H1 (cell line): ENCODE measurements at regions of chr9 and their contacts with region 1.

Region 1: DNA sequence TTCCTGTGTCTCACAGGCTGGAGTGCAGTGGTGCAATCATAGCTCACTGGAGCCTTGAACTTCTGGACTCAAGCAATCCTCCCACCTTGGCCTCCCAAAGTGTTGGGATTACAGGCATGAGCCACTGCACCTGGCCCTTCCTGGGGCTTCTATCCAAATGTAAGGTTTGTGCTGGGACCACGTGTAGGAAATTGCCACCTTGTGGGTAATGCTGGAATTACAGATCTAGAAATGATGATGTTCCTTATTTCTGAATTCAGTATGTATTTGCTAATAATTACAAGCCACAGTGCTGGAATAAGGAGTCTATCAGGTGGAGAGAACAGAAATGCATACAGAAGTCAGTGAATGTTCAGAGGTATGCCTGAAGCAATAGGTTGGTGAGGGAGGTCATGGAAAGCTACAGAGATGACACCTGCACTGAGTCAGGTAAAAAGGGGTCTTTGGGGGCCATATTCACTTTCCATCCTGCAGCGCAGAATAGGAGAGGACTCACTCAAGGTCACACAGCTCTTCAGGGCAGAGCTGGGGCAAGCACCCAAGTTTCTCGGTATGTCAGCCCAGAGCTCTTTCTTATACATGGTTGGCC is 8.8 kb upstream of the IGFBPL1 start:
- DNase-seq: no peak
- H3K4me3 ChIP-seq: no peak overlapping the region
- H3K27ac ChIP-seq: no peak overlapping the region
- H3K4me1 ChIP-seq: no peaks in the 10 kb centered on the region
- H3K27me3 ChIP-seq: peaks cover 0 to 4% (median under 1%) of the 10 kb centered on the region in 4 experiments; a peak in 3 of 7 replicates
- CTCF ChIP-seq: peak in 2 of 3 experiments; percentile 55 to 61; a peak in 3 of 4 replicates
- EP300 ChIP-seq: no peak
- POLR2A ChIP-seq: no peak
- RAD21 ChIP-seq: peak; percentile 55 to 62

Region 2: GRCh38 chr9:38370191-38370590 is 62.8 kb before region 1 on chr9:
- CTCF ChIA-PET with region 1: no interaction called
- POLR2A ChIA-PET with region 1: no interaction called
- DNase-seq: no peak
- H3K4me3 ChIP-seq: no peak overlapping the region
- H3K27ac ChIP-seq: no peak overlapping the region
- H3K4me1 ChIP-seq: no peaks in the 10 kb centered on the region; a peak in 1 of 7 replicates
- H3K27me3 ChIP-seq: no peaks in the 10 kb centered on the region; a peak in 2 of 7 replicates
- CTCF ChIP-seq: no peak
- EP300 ChIP-seq: no peak
- POLR2A ChIP-seq: no peak
- RAD21 ChIP-seq: no peak

Region 3: DNA sequence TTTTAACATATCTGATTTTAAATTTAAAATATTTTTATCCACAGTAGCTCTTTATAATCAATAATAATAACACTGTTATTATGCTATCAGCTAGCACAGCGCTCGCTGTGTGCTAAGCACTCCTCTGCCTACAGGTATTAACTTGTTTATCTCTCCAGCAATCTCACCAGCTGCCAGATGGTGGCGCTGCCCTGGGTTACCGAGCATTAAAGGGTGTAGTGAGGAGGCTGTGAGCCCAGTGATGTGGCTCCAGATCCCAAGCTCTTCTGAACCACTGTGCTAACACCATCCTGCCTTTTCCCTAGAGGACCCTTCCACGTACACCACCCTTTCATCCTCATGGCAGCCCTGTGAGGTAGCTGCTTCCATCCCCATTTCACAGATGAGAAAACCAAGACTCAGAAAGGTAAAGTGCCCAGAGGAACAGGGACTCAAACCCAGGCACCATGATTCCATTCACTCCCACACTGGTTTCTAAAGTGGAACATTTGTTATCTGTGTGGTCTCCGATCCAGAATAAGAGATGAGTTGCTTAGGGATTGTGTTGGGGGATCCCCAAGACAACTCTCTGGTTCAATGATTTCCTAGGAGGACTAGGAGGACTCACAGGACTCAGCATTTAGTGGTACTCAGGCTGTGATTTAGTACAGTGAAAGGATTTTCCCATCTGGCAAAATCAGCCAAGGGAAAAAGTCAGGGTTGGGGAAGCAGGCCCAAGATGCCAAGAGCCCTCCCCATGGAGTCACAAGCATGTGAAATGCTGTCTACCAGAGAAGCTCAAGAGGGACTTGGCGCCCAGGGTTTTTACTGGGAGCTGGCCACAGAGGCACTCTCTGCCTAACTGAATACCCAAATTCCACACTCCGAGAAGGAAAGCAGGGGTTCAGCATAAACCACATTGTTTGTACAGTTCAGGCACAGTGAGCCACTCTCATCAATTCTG is 15.7 kb before region 1 on chr9:
- CTCF ChIA-PET with region 1: interaction called, 47 read pairs
- POLR2A ChIA-PET with region 1: interaction called, 3 read pairs
- DNase-seq: peak in 1 of 2 experiments; percentile 95
- H3K4me3 ChIP-seq: no peak overlapping the region
- H3K27ac ChIP-seq: no peak overlapping the region
- H3K4me1 ChIP-seq: peaks cover 8 to 30% (median 16%) of the 10 kb centered on the region in 4 experiments
- H3K27me3 ChIP-seq: no peaks in the 10 kb centered on the region
- CTCF ChIP-seq: peak; percentile 86 to 90 (median 87)
- EP300 ChIP-seq: no peak
- POLR2A ChIP-seq: no peak
- RAD21 ChIP-seq: peak; percentile 65 to 76

Region 4: GRCh38 chr9:38443181-38443580 is 10.2 kb after region 1 on chr9:
- CTCF ChIA-PET with region 1: interaction called, 50 read pairs
- POLR2A ChIA-PET with region 1: no interaction called
- DNase-seq: no peak
- H3K4me3 ChIP-seq: no peak overlapping the region
- H3K27ac ChIP-seq: no peak overlapping the region
- H3K4me1 ChIP-seq: no peaks in the 10 kb centered on the region
- H3K27me3 ChIP-seq: no peaks in the 10 kb centered on the region
- CTCF ChIP-seq: no peak
- EP300 ChIP-seq: no peak
- POLR2A ChIP-seq: no peak
- RAD21 ChIP-seq: no peak

Region 5: DNA sequence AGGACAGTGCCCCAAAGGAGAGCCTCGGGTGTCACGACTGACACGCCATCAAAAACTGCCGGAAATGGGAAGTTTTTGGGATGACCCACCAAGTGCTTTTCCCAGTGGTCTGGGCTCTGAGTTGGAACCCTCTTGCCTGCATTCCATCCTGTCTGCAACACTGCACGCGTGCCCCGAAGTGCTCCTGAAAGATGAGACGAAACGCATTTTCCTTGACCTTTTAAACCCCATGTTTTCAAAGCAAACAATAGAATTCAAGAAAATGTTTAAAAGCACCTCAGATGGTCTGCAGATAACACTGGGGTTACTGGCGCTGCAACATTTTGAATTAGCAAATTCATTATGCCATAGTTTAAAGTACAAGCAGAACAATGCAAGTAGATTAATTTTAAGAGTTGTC is 94.5 kb after region 1 on chr9:
- CTCF ChIA-PET with region 1: no interaction called
- POLR2A ChIA-PET with region 1: no interaction called
- DNase-seq: no peak
- H3K4me3 ChIP-seq: no peak overlapping the region
- H3K27ac ChIP-seq: no peak overlapping the region
- H3K4me1 ChIP-seq: no peaks in the 10 kb centered on the region
- H3K27me3 ChIP-seq: no peaks in the 10 kb centered on the region
- CTCF ChIP-seq: no peak
- EP300 ChIP-seq: no peak
- POLR2A ChIP-seq: no peak
- RAD21 ChIP-seq: no peak